ENCODE measurements at regions of chr12 and their contacts with region 1.

Region 1: GRCh38 chr12:113075137-113075683 is 18.7 kb downstream of the DTX1 start:
- DNase-seq: peak; percentile 95
- ATAC-seq: peak; percentile 86
- H3K4me3 ChIP-seq: peak overlapping the region in 3 of 5 experiments; percentile 12 to 29 (median 19)
- H3K4me3 Mint-ChIP-seq: peak overlapping the region; percentile 74
- H3K27ac ChIP-seq: peak overlapping the region; percentile 91 to 92
- H3K27ac Mint-ChIP-seq: peak overlapping the region; percentile 91
- H3K4me1 ChIP-seq: peaks cover 95 to 97% of the 10 kb centered on the region in 2 donors
- H3K4me1 Mint-ChIP-seq: peaks cover 89% of the 10 kb centered on the region
- H3K27me3 ChIP-seq: no peaks in the 10 kb centered on the region
- H3K27me3 Mint-ChIP-seq: no peaks in the 10 kb centered on the region
- CTCF ChIP-seq: no peak

Region 2: GRCh38 chr12:112978163-112979040 is 96.8 kb before region 1 on chr12 and contains the start of gene OAS2:
- CTCF ChIA-PET with region 1: no interaction called
- POLR2A ChIA-PET with region 1: no interaction called
- intact Hi-C with region 1: loop called (anchors 5 kb)
- DNase-seq: peak; percentile 92
- ATAC-seq: peak; percentile 94
- H3K4me3 ChIP-seq: peak within 1 kb of the TSS; percentile 70 to 94 (median 78)
- H3K4me3 Mint-ChIP-seq: peak within 1 kb of the TSS; percentile 98
- H3K27ac ChIP-seq: peak within 1 kb of the TSS; percentile 90 to 94
- H3K27ac Mint-ChIP-seq: peak within 1 kb of the TSS; percentile 98
- H3K4me1 ChIP-seq: peaks cover 39 to 40% of the 10 kb centered on the region in 2 donors
- H3K4me1 Mint-ChIP-seq: peaks cover 59% of the 10 kb centered on the region
- H3K27me3 ChIP-seq: no peaks in the 10 kb centered on the region
- H3K27me3 Mint-ChIP-seq: no peaks in the 10 kb centered on the region
- CTCF ChIP-seq: no peak
- total RNA-seq, gene OAS2: 57.4 and 59.3 TPM in 2 replicates

Region 3: DNA sequence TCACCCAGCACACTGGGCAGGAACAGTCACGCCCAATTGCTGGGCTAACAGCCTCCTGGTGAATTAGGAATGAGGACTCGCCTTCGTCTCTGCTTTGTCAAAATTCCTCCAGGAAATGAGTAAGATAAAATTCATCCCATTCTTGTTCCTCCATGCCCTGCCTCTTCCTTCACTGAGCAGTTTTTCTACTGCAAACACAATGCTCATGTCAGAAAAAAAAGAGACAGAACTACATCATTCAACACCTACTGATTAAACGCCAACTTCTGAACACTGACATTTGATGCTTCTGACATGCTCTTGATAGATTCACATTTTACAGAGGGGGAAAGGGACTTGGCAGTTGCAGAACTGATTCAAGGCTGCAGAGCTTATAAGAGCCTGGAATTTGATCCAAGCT is 56.2 kb before region 1 on chr12:
- CTCF ChIA-PET with region 1: no interaction called
- POLR2A ChIA-PET with region 1: no interaction called
- intact Hi-C with region 1: no loop called
- DNase-seq: no peak
- ATAC-seq: no peak
- H3K4me3 ChIP-seq: no peak overlapping the region
- H3K4me3 Mint-ChIP-seq: no peak overlapping the region
- H3K27ac ChIP-seq: no peak overlapping the region
- H3K27ac Mint-ChIP-seq: no peak overlapping the region
- H3K4me1 ChIP-seq: no peaks in the 10 kb centered on the region
- H3K4me1 Mint-ChIP-seq: no peaks in the 10 kb centered on the region
- H3K27me3 ChIP-seq: no peaks in the 10 kb centered on the region
- H3K27me3 Mint-ChIP-seq: no peaks in the 10 kb centered on the region
- CTCF ChIP-seq: no peak

Region 4: DNA sequence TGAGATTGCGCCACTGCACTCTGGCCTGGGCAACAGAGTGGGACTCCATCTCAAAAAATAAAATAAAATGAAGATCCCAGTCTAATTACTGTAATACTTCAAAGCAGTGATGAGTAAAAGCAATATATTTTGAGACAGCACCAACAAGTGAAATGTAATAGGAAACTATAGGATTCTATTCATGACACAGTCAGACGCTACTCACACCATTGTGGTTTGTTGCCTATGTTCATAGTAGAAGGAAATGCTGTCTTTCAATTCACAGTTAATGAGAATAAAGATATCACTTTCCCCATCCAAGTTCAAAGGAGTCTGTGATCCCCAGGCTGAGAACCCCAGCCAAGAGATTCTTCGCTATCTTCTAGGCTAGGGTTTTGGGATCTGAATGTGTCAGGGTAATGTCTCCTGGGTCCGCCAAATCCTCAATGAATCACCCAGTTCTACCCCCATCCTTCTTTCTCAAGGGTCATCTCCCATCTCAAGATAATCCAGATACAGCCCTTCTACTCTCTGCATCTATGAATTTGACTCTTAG is 35.2 kb before region 1 on chr12:
- CTCF ChIA-PET with region 1: no interaction called
- POLR2A ChIA-PET with region 1: no interaction called
- intact Hi-C with region 1: no loop called
- DNase-seq: no peak
- ATAC-seq: no peak
- H3K4me3 ChIP-seq: no peak overlapping the region
- H3K4me3 Mint-ChIP-seq: no peak overlapping the region
- H3K27ac ChIP-seq: no peak overlapping the region
- H3K27ac Mint-ChIP-seq: no peak overlapping the region
- H3K4me1 ChIP-seq: no peaks in the 10 kb centered on the region
- H3K4me1 Mint-ChIP-seq: no peaks in the 10 kb centered on the region
- H3K27me3 ChIP-seq: no peaks in the 10 kb centered on the region
- H3K27me3 Mint-ChIP-seq: peaks cover 5% of the 10 kb centered on the region
- CTCF ChIP-seq: no peak

Region 5: GRCh38 chr12:113086249-113087164 is 11.3 kb after region 1 on chr12:
- CTCF ChIA-PET with region 1: interaction called, 12 read pairs
- POLR2A ChIA-PET with region 1: no interaction called
- intact Hi-C with region 1: loop called (anchors 1 kb)
- DNase-seq: peak; percentile 58
- ATAC-seq: peak; percentile 21
- H3K4me3 ChIP-seq: peak overlapping the region in 3 of 5 experiments; percentile 5 to 20 (median 16)
- H3K4me3 Mint-ChIP-seq: peak overlapping the region; percentile 74
- H3K27ac ChIP-seq: peak overlapping the region; percentile 76 to 85
- H3K27ac Mint-ChIP-seq: peak overlapping the region; percentile 86
- H3K4me1 ChIP-seq: peaks cover 97 to 98% of the 10 kb centered on the region in 2 donors
- H3K4me1 Mint-ChIP-seq: peaks cover 85% of the 10 kb centered on the region
- H3K27me3 ChIP-seq: no peaks in the 10 kb centered on the region
- H3K27me3 Mint-ChIP-seq: no peaks in the 10 kb centered on the region
- CTCF ChIP-seq: no peak

Region 6: DNA sequence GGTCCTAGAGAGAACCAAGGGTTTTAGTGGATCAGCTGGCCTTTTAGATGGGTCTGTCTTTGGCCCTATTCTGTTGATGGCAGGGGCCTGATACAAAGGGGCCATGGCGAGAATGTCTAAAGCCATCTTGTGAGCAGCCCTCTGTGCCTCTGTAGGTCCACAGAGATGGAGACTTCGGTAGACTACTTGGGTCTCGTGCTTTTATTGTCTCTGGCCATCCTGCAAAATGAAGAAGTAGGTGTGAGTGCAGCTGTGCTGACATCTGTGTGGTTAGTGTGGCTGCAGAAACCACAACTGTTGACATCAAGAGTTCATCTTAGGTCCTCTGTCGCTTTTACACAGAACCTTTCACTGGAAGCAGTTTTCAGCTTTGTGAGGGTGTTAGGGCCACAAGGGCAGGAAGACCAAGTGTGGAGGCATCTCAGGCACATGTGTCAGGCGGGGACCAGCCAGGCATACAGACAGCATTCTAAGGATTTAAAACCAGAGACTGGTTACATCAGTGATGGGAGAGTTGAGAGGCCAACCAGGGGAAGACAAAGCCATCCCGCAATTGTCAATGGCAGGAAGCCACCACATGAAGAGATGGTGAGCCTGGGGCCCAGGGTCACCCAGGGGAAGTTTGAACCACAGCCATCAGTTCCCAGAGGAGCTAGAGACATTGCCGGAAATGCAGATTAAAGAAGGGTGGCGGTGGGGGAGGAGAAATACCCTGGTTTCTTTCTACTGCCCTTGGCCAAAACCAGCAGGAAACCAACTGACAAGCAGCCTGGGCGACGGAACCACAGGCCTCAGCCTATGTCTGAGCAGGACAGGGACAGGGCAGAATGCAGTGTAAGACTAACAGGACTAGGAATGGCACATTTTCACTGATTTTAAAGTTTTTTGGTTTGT is 133.1 kb after region 1 on chr12:
- CTCF ChIA-PET with region 1: no interaction called
- POLR2A ChIA-PET with region 1: no interaction called
- intact Hi-C with region 1: loop called (anchors 1 kb)
- DNase-seq: peak; percentile 95
- ATAC-seq: peak; percentile 75
- H3K4me3 ChIP-seq: peak overlapping the region in 3 of 5 experiments; percentile 4 to 47 (median 5)
- H3K4me3 Mint-ChIP-seq: peak overlapping the region; percentile 86
- H3K27ac ChIP-seq: peak overlapping the region; percentile 91 to 94
- H3K27ac Mint-ChIP-seq: peak overlapping the region; percentile 99
- H3K4me1 ChIP-seq: peaks cover 46 to 59% of the 10 kb centered on the region in 2 donors
- H3K4me1 Mint-ChIP-seq: peaks cover 62% of the 10 kb centered on the region
- H3K27me3 ChIP-seq: no peaks in the 10 kb centered on the region
- H3K27me3 Mint-ChIP-seq: no peaks in the 10 kb centered on the region
- CTCF ChIP-seq: no peak

Measured in B cell (primary cell).